AG04449 (cell line): ENCODE measurements at regions of chr2 and their contacts with region 1.

Region 1: GRCh38 chr2:18520451-18521425 is 39.7 kb downstream of the RDH14 start:
- DNase-seq: no peak
- H3K4me3 ChIP-seq: no peak overlapping the region
- CTCF ChIP-seq: peak; percentile 84

Region 2: GRCh38 chr2:17892770-17893534 is 627.8 kb before region 1 on chr2:
- CTCF ChIA-PET with region 1: no interaction called
- POLR2A ChIA-PET with region 1: no interaction called
- DNase-seq: no peak
- H3K4me3 ChIP-seq: no peak overlapping the region
- CTCF ChIP-seq: no peak

Region 3: DNA sequence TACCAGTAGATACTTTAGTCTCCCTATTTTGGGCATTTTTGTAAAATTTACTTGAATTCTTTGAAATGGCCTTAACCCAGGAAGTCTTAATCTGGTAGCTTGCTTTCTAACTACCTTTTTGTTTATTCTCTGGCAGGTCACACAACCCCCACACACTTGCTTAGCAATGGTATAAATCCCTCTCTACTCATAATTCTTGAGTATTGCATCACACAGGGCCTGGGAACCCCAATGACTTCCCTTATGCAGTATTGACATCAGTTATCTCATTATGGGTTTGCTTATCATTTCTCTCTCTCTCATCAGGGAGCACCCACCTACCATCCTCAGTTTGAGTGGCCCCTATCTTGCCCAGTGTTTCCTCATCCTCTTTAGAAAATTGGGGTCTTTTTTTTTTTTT is 435.1 kb before region 1 on chr2:
- CTCF ChIA-PET with region 1: no interaction called
- POLR2A ChIA-PET with region 1: no interaction called
- DNase-seq: no peak
- H3K4me3 ChIP-seq: no peak overlapping the region
- CTCF ChIP-seq: no peak

Region 4: GRCh38 chr2:18244845-18245244 is 275.9 kb before region 1 on chr2:
- CTCF ChIA-PET with region 1: no interaction called
- POLR2A ChIA-PET with region 1: no interaction called
- DNase-seq: no peak
- H3K4me3 ChIP-seq: no peak overlapping the region
- CTCF ChIP-seq: no peak

Region 5: DNA sequence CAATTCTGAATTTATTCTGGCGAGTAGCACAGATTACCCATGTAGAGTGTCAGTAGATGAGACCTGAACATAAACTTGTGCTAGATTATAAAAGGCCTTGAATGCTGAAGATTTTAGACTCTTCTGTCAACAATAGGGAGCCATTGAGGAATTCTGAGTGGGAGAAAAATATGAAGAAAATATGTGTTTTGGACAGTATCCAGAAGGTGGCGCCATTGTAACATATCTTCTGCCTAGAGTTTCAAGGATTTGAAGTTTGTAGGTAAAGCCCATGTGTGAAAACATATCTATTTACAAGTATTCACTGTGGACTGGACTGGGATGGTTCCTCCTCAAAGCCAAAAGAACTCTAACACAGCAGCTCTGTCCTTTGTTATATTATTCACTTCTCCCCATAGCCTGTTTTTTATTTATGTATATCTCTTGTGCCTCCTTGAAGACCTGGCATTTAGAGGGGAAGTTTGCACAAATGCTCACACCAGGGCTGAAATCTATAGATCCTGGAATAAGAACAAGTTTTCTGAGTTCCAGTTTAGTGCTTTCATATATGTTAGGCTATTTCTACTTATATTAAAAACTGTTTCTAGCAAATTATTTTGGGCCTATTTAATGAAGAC is 85.2 kb before region 1 on chr2:
- CTCF ChIA-PET with region 1: interaction called, 97 read pairs
- POLR2A ChIA-PET with region 1: no interaction called
- DNase-seq: no peak
- H3K4me3 ChIP-seq: no peak overlapping the region
- CTCF ChIP-seq: peak; percentile 39

Region 6: GRCh38 chr2:18546567-18546966 is 25.8 kb after region 1 on chr2:
- CTCF ChIA-PET with region 1: interaction called, 18 read pairs
- POLR2A ChIA-PET with region 1: no interaction called
- DNase-seq: no peak
- H3K4me3 ChIP-seq: no peak overlapping the region
- CTCF ChIP-seq: no peak

Region 7: GRCh38 chr2:18578033-18578432 is 57.3 kb after region 1 on chr2:
- CTCF ChIA-PET with region 1: no interaction called
- POLR2A ChIA-PET with region 1: no interaction called
- DNase-seq: no peak
- H3K4me3 ChIP-seq: no peak overlapping the region
- CTCF ChIP-seq: no peak

Region 8: DNA sequence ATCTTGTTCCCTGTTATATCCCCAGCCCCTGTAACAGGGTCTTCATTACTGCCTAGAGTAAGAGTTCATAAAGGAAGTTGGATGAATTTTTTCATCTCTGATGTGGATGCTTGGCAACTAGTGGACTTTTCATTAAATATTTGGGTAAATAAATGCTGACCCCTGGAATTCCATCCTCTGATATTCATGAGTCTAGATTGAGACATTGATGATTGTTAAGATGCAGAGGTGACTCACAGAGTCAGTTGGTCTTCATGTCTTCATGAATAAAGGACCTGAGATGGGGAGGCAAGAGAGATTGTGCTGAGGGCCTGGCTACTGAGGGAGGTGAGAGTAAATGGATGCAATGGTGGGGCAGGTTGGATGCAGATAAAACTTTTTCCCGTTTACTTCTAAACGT is 201.4 kb after region 1 on chr2:
- CTCF ChIA-PET with region 1: interaction called, 15 read pairs
- POLR2A ChIA-PET with region 1: no interaction called
- DNase-seq: no peak
- H3K4me3 ChIP-seq: no peak overlapping the region
- CTCF ChIP-seq: no peak

Region 9: GRCh38 chr2:18749912-18750526 is 229.3 kb after region 1 on chr2:
- CTCF ChIA-PET with region 1: interaction called, 126 read pairs
- POLR2A ChIA-PET with region 1: no interaction called
- DNase-seq: no peak
- H3K4me3 ChIP-seq: no peak overlapping the region
- CTCF ChIP-seq: peak; percentile 59

Region 10: GRCh38 chr2:19362755-19363473 is 842.2 kb after region 1 on chr2:
- CTCF ChIA-PET with region 1: interaction called, 35 read pairs
- POLR2A ChIA-PET with region 1: no interaction called
- DNase-seq: no peak
- H3K4me3 ChIP-seq: peak overlapping the region; percentile 73
- CTCF ChIP-seq: peak; percentile 77